ENCODE measurements at regions of chr3 and their contacts with region 1.

Region 1: GRCh38 chr3:66500576-66501482 is at the start of gene LRIG1:
- DNase-seq: peak; percentile 94 to 99 (median 98)
- ATAC-seq: peak; percentile 92
- H3K4me3 ChIP-seq: peak within 1 kb of the TSS; percentile 79
- H3K4me3 Mint-ChIP-seq: peak within 1 kb of the TSS; percentile 97
- H3K27ac ChIP-seq: peak within 1 kb of the TSS in 1 of 2 donors; percentile 11
- H3K27ac Mint-ChIP-seq: peak within 1 kb of the TSS; percentile 80
- H3K4me1 ChIP-seq: peaks cover 40% of the 10 kb centered on the region
- H3K4me1 Mint-ChIP-seq: peaks cover 69% of the 10 kb centered on the region
- H3K27me3 ChIP-seq: no peaks in the 10 kb centered on the region
- H3K27me3 Mint-ChIP-seq: no peaks in the 10 kb centered on the region
- CTCF ChIP-seq: peak; percentile 23
- total RNA-seq, gene LRIG1: 30.1 to 33.1 TPM

Region 2: DNA sequence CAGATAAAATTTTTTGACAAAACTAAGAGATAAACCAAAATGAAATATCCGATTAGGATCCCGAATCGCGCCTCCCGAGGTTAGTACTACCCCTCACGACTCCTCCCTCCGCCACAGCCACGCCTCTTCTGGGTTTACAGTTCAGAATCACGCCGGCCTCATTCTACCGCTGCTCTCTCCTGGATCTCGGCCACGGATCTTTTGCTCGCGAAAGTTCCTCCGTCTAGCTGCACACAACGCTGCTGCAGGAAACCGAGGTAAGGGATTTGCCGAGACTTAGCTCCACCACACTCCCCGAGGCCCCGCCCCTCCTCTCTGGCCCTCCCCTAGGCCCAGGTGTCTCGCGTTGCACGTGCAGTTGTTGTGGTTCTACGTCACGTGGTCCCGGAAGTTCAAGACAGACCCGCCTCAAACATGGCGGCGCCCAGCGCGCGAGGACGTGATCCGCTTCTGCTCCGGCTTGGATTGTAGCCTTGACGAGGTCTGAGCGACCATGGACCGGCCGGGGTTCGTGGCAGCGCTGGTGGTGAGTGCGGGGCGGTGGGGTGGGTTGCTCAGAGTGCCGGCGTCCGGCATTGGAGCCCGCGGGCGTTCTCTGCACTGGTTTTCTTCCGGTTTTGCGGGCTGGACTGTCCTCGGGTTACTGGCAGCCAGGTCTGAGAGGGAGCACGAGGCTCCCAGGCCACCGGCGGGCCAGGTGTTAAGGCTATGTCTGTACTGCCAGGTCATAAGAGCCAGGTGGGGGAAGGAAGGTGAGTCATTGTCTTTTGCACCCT is 280.0 kb before region 1 on chr3 and contains the start of gene SLC25A26:
- CTCF ChIA-PET with region 1: no interaction called
- POLR2A ChIA-PET with region 1: interaction called, 3 read pairs
- intact Hi-C with region 1: loop called in 1 of 2 experiments (anchors 5 kb)
- DNase-seq: peak; percentile 94 to 99 (median 97)
- ATAC-seq: peak; percentile 97
- H3K4me3 ChIP-seq: peak within 1 kb of the TSS; percentile 79
- H3K4me3 Mint-ChIP-seq: peak within 1 kb of the TSS; percentile 85
- H3K27ac ChIP-seq: peak within 1 kb of the TSS; percentile 40 to 81
- H3K27ac Mint-ChIP-seq: peak within 1 kb of the TSS; percentile 64
- H3K4me1 ChIP-seq: peaks cover 10% of the 10 kb centered on the region
- H3K4me1 Mint-ChIP-seq: peaks cover 43% of the 10 kb centered on the region
- H3K27me3 ChIP-seq: no peaks in the 10 kb centered on the region
- H3K27me3 Mint-ChIP-seq: peaks cover 2% of the 10 kb centered on the region
- CTCF ChIP-seq: no peak
- total RNA-seq, gene SLC25A26: 26.9 to 30.2 TPM

Region 3: DNA sequence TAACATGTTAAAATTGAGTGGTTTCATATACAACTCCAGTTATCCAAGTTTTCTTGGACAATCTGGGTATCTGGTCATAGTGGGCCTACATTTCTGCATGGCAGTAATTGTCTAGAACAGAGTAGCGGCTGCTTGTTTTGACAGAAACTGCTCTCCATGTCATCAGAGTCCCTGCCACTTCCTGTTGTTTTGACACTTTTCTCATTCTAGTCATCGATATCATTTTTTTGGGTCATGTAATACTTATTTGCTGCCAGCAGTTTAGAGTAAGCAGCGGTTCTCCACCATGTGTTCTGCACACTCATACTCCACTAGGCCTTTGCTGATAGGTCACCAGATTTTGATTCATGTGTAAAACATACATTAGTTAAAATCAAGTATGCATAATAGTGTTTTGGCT is 198.5 kb before region 1 on chr3:
- CTCF ChIA-PET with region 1: no interaction called
- POLR2A ChIA-PET with region 1: interaction called, 3 read pairs
- intact Hi-C with region 1: loop called in 1 of 2 experiments (anchors 10 kb)
- DNase-seq: peak in 12 of 14 experiments; percentile 9 to 92 (median 40)
- ATAC-seq: peak; percentile 80
- H3K4me3 ChIP-seq: no peak overlapping the region
- H3K4me3 Mint-ChIP-seq: peak overlapping the region; percentile 47
- H3K27ac ChIP-seq: peak overlapping the region; percentile 71 to 85
- H3K27ac Mint-ChIP-seq: peak overlapping the region; percentile 98
- H3K4me1 ChIP-seq: peaks cover 40% of the 10 kb centered on the region
- H3K4me1 Mint-ChIP-seq: peaks cover 81% of the 10 kb centered on the region
- H3K27me3 ChIP-seq: no peaks in the 10 kb centered on the region
- H3K27me3 Mint-ChIP-seq: no peaks in the 10 kb centered on the region
- CTCF ChIP-seq: no peak

Region 4: GRCh38 chr3:66464512-66464894 is 36.3 kb before region 1 on chr3:
- CTCF ChIA-PET with region 1: interaction called, 3 read pairs
- POLR2A ChIA-PET with region 1: interaction called, 4 read pairs
- intact Hi-C with region 1: loop called in 1 of 2 experiments (anchors 5 kb)
- DNase-seq: no peak
- ATAC-seq: no peak
- H3K4me3 ChIP-seq: no peak overlapping the region
- H3K4me3 Mint-ChIP-seq: no peak overlapping the region
- H3K27ac ChIP-seq: no peak overlapping the region
- H3K27ac Mint-ChIP-seq: no peak overlapping the region
- H3K4me1 ChIP-seq: peaks cover 7% of the 10 kb centered on the region
- H3K4me1 Mint-ChIP-seq: peaks cover 28% of the 10 kb centered on the region
- H3K27me3 ChIP-seq: no peaks in the 10 kb centered on the region
- H3K27me3 Mint-ChIP-seq: no peaks in the 10 kb centered on the region
- CTCF ChIP-seq: no peak

Region 5: DNA sequence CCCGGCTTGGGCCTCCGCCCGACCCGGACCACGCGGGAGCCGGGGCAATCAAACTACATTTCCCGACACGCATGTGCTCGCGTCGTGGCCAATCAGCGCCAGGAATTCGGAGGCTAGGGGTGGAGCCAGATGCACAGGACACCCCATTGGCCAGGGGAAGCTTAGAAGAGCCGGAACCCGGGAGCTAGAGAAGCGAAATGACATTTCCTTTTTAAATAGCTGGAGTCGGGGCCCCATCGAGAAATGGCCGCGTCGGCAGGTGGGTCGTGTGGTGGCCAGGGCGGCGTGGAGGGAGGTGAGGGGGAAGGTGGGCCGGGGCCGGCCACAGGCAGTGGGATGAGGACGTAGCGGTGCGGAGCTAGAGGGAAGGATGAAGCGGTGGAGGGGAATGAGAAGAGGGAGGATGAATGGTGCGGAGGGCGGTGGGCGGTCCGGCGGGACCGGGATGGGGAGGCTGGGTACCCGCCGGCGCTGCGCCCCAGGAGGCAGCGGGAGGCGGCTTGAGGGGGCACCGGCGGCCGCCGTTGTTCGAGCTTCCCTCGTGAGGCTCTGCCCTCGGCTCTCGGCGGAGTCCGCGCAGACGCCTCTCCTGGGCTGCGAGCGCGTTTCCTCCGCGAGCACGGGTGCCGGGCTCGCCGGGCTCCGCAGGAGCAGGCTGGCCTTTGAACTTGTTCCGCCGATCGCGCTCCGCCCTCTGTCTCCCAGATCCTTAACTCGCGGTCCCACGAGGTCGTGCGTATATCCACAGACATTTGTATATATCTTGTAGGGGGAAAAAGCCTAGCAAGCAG is 497.5 kb after region 1 on chr3 and contains the start of gene KBTBD8:
- CTCF ChIA-PET with region 1: no interaction called
- POLR2A ChIA-PET with region 1: no interaction called
- intact Hi-C with region 1: loop called in 1 of 2 experiments (anchors 5 kb)
- DNase-seq: peak; percentile 7 to 99 (median 95)
- ATAC-seq: peak; percentile 94
- H3K4me3 ChIP-seq: peak within 1 kb of the TSS; percentile 73
- H3K4me3 Mint-ChIP-seq: peak within 1 kb of the TSS; percentile 98
- H3K27ac ChIP-seq: peak within 1 kb of the TSS; percentile 53 to 67
- H3K27ac Mint-ChIP-seq: peak within 1 kb of the TSS; percentile 89
- H3K4me1 ChIP-seq: peaks cover 16% of the 10 kb centered on the region
- H3K4me1 Mint-ChIP-seq: peaks cover 39% of the 10 kb centered on the region
- H3K27me3 ChIP-seq: peaks cover 0 to 18% of the 10 kb centered on the region in 2 experiments
- H3K27me3 Mint-ChIP-seq: peaks cover 34% of the 10 kb centered on the region
- CTCF ChIP-seq: no peak
- total RNA-seq, gene KBTBD8: 7.1 to 7.7 TPM